ENCODE measurements at regions of chr7 and their contacts with region 1.

Region 1: DNA sequence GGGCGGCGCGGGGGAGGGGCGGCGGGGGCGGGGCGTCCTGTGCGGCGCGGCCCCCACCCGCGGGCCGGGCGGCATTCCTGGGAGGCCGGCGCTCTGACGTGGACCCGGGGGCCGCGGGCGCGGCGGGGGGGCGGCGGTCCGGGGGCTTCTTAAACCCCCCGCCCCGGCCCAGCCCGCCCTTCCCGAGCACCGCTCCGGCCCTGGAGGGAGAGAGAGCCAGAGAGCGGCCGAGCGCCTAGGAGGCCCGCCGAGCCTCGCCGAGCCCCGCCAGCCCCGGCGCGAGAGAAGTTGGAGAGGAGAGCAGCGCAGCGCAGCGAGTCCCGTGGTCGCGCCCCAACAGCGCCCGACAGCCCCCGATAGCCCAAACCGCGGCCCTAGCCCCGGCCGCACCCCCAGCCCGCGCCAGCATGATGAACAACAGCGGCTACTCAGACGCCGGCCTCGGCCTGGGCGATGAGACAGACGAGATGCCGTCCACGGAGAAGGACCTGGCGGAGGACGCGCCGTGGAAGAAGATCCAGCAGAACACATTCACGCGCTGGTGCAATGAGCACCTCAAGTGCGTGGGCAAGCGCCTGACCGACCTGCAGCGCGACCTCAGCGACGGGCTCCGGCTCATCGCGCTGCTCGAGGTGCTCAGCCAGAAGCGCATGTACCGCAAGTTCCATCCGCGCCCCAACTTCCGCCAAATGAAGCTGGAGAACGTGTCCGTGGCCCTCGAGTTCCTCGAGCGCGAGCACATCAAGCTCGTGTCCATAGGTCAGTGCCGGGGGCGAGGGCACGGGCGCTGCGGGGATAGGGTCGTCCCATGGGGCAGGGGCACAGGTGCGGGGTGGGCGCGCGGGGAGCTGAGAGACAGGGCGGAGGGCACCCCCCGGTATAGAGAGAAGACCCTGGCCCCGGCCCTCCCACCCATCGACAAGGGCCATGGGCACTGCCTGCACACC is at the start of gene FLNC:
- DNase-seq: no peak
- H3K4me3 ChIP-seq: peak within 1 kb of the TSS; percentile 97
- H3K27me3 ChIP-seq: no peaks in the 10 kb centered on the region
- CTCF ChIP-seq: no peak
- polyA plus RNA-seq, gene FLNC: 24.6 and 58.6 TPM in 2 replicates

Region 2: DNA sequence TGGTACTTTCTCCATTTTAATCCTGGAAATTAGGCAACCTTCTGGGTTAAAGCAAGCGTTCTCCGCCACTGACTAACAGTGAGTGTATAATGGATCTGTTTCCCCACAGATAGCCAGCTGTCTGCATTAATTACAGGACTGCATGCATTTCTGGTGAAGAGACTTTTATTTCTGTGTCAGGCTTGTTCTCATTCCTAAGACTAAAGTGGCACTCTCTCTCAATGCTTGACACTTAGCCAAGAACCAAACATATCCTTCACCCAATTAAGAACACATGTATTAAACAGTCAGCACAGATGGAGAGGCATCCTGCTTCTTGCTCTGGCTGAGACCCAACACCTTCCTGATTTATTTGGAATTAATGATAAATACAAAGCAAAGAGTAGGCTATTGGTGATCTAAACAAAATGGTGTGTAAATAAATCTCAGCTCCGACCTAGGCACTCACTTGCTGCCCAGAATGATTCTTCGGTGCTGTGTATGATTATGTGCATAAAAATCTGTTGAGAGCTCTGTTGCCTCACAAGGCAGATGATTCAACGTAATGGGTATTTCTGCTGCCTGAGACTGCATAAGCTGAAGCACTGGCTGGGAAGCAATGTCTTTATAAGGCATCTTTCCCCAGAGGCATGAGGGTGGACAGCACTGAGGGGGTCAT is 74.6 kb before region 1 on chr7:
- CTCF ChIA-PET with region 1: no interaction called
- POLR2A ChIA-PET with region 1: interaction called, 11 read pairs
- DNase-seq: peak; percentile 94
- H3K4me3 ChIP-seq: no peak overlapping the region
- H3K27me3 ChIP-seq: no peaks in the 10 kb centered on the region
- CTCF ChIP-seq: no peak

Region 3: DNA sequence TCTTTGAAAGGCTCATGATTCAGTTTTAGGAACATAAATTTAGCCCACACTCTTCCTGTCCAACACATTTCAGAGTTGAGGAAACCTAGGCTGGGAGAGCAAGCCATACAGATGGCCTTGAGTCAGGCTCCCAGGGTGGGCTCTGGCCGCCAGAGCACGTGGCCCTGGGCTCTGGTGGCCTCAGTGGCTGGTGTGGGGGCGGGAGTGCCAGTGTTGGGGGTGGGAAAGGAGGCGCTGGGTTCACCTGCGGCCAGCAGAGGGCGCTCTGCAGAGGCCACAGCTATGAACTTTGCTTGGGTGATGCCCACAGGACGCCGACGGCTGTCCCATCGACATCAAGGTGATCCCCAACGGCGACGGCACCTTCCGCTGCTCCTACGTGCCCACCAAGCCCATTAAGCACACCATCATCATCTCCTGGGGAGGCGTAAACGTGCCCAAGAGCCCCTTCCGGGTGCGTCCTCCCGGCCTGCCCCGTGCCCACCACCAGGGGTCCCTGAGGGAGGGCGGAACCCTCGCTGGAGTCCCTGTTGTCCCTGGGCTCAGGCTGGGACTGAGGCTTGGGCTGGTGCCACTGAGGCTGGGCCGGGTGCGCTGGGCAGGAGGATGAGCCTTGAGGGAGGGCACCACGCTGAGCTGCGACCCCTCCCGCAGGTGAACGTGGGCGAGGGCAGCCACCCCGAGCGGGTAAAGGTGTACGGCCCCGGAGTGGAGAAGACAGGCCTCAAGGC is 11.6 kb after region 1 on chr7:
- CTCF ChIA-PET with region 1: interaction called, 30 read pairs
- POLR2A ChIA-PET with region 1: interaction called, 7 read pairs
- DNase-seq: no peak
- H3K4me3 ChIP-seq: no peak overlapping the region
- H3K27me3 ChIP-seq: no peaks in the 10 kb centered on the region
- CTCF ChIP-seq: peak; percentile 86